Dorsolateral prefrontal cortex (tissue), 120 donors: ENCODE measurements at regions of chr15 and their contacts with region 1.

Region 1: DNA sequence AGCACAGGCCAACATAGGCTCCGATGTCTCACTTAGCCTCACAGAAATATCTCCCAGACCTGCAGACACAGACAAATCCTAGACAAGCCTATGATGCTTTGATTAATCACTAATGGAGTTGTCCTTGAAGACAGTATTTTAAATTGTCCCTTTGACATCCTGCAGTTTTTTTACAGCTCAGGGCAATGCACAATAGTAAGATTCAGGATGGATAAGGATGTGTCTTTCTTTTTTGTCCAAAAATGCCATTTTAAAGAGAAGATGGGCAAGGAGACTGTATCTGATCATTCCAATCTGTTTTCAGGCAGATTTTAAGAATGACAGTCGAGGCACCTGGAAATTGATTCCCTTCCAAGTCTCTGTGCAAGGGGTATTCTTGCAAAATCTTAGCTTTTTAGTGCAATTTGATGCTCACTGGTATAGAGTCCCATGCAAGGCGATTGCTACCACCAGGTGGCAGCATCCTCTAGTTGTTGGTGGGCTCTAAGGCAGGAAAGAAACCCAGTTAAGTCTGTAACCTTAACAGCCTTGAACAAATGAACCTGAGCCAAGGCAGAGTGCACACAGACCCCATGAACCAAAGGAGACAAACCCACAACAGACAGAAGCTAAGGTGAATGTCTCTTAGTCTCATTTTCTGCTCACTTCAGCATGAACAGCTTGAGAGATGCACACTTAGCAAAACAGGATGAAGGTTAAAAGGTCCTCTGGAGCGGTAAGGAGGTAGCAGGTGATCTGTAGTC is 51.2 kb upstream of the MINAR1 start:
- DNase-seq: peak; percentile 74 to 91 (median 84)
- H3K4me3 ChIP-seq: no peak overlapping the region
- H3K27ac ChIP-seq: no peak overlapping the region
- H3K27me3 ChIP-seq: peaks cover 0 to 6% (median 0%) of the 10 kb centered on the region in 45 donors
- CTCF ChIP-seq: peak; percentile 83 to 100 (median 95)

Region 2: DNA sequence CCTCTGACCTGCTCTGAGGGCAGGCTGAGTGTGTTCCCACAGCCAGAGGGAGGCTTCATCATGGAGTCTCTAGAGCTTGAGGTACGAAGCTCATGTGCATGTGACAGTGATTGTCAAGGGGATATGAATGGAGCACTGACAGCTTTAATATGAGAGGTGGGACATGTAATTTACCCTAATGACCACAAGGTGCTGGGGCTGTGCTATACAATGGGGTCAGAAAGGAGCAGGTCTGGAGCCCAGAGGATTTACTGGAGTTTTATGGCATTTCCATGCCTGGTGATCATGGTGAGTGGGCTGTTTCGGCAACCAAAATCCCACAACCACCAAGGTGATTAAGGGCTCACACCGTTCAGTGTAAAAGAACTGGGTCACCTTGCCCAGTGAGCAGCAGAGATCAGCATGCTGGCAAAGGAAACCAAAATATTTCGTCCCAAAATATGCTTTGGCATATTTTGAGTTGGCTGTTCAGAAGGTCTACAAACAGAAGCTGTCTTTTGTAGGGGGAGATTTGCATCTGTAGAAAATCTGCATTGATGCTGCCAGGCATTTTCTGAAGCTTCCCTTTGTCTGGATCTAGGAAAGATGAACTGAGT is 250.3 kb before region 1 on chr15:
- intact Hi-C with region 1: no loop called
- DNase-seq: peak in 1 of 10 donors; percentile 54
- H3K4me3 ChIP-seq: no peak overlapping the region
- H3K27ac ChIP-seq: peak overlapping the region in 1 of 59 donors; percentile 61
- H3K27me3 ChIP-seq: peaks cover 0 to 6% (median 0%) of the 10 kb centered on the region in 45 donors
- CTCF ChIP-seq: peak in 1 of 56 donors; percentile 14

Region 3: DNA sequence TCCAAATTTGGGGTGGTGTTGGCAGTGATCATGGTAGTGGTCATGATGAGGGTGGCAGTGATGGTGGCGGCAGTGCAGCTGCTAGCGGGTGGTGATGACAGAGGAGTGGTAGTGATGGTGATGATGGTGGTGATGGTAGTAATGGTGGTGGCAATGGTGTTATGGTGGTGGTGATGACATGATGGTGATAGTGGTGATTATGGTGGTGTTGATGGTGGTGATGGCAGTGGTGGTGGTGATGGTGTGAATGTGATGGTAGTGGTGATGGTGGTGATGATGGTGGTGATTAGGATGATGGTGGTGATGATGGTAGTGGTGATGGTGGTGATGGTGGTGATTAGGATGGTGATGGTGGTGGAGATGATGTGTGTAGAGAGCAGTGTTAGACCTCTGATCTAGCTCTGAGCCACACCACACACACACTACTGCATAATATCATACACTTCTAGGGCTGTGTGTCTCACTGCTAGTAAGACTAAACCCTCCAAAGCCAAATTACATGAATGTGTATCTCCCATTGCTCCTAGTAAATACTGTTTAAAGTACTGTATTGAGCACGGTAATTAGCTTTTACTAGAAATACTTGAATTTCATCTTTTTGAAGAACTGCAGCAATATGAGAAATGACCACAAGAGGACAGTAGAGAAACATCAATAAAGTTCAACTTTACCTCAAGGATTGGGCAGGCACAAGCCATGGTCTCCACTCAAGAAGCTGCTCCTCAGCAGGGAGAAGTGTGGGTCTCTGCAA is 41.2 kb before region 1 on chr15:
- intact Hi-C with region 1: loop called in 1 of 2 experiments (anchors 5 kb)
- DNase-seq: peak in 1 of 10 donors; percentile 32
- H3K4me3 ChIP-seq: no peak overlapping the region
- H3K27ac ChIP-seq: no peak overlapping the region
- H3K27me3 ChIP-seq: no peaks in the 10 kb centered on the region
- CTCF ChIP-seq: peak; percentile 60 to 90 (median 81)

Region 4: GRCh38 chr15:79370716-79371115 is 10.2 kb before region 1 on chr15:
- intact Hi-C with region 1: no loop called
- DNase-seq: no peak
- H3K4me3 ChIP-seq: no peak overlapping the region
- H3K27ac ChIP-seq: no peak overlapping the region
- H3K27me3 ChIP-seq: no peaks in the 10 kb centered on the region
- CTCF ChIP-seq: no peak

Region 5: DNA sequence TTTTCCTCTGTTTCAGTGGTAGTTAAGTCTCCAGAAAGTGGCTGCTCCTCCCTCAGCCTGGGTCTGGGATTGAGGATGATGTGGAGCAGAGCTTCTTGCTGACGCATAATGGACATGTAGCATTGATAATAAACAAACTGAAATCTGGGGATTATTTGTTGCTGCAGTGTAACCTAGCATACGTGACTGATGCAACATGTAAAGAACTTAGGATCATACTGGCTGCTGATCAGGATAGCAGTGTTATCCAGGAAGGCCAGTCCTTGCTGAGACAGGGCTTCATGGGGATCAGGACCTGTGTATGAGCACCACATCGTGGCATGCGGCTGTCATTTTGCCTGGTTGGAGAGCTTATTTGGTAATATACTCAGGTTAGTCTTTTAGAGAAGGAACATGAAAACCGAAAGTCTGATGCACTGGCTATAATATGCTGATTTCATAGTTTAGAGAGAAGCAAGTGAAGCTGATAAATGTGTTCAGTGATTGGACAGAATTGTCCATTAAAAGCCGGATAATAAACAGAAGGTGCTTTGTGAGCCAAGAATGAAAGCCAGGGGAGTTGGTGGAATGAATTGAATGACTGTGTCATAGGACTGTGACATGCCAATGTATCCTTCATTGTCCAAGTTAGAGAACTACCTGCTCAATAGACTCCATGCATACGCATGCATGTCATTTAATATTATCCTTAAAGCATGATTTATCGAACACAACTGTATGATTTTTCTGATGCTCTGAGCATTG is 55.3 kb after region 1 on chr15:
- intact Hi-C with region 1: loop called in 1 of 2 experiments (anchors 2 kb)
- DNase-seq: no peak
- H3K4me3 ChIP-seq: peak overlapping the region in 12 of 59 donors; percentile 3 to 47 (median 17)
- H3K27ac ChIP-seq: no peak overlapping the region
- H3K27me3 ChIP-seq: peaks cover 0 to 28% (median 18%) of the 10 kb centered on the region in 45 donors
- CTCF ChIP-seq: no peak

Region 6: DNA sequence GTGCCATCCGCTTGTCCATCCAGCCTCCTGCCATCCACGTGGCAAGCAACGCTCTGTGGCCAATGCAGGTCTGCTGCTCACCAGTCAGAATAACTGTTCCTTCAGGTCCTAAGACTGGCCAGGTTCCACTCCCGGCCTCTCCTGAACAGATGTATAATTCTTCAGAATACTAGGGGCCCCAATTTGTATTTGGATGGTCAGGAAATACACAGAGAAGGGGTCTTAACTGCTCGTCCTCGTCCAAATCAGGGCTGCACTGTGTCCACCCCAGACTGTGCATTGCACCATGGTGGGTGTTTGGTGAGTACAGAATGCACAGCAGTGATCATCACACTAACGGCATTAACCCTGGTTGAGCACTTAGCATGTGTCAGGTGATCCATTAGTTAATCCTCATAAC is 97.2 kb after region 1 on chr15:
- intact Hi-C with region 1: no loop called
- DNase-seq: no peak
- H3K4me3 ChIP-seq: no peak overlapping the region
- H3K27ac ChIP-seq: no peak overlapping the region
- H3K27me3 ChIP-seq: peaks cover 0 to 4% (median 0%) of the 10 kb centered on the region in 45 donors
- CTCF ChIP-seq: no peak

Region 7: GRCh38 chr15:79596051-79596507 is 215.2 kb after region 1 on chr15:
- intact Hi-C with region 1: loop called (anchors 2 kb)
- DNase-seq: no peak
- H3K4me3 ChIP-seq: no peak overlapping the region
- H3K27ac ChIP-seq: no peak overlapping the region
- H3K27me3 ChIP-seq: peaks cover 0 to 24% (median 2%) of the 10 kb centered on the region in 45 donors
- CTCF ChIP-seq: peak in 55 of 56 donors; percentile 30 to 72 (median 58)

Region 8: GRCh38 chr15:79853458-79854328 is 472.8 kb after region 1 on chr15:
- intact Hi-C with region 1: loop called (anchors 1 to 5 kb)
- DNase-seq: peak; percentile 41 to 83 (median 73)
- H3K4me3 ChIP-seq: no peak overlapping the region
- H3K27ac ChIP-seq: no peak overlapping the region
- H3K27me3 ChIP-seq: no peaks in the 10 kb centered on the region
- CTCF ChIP-seq: peak; percentile 67 to 99 (median 93)